ENCODE measurements at regions of chr6 and their contacts with region 1.

Region 1: DNA sequence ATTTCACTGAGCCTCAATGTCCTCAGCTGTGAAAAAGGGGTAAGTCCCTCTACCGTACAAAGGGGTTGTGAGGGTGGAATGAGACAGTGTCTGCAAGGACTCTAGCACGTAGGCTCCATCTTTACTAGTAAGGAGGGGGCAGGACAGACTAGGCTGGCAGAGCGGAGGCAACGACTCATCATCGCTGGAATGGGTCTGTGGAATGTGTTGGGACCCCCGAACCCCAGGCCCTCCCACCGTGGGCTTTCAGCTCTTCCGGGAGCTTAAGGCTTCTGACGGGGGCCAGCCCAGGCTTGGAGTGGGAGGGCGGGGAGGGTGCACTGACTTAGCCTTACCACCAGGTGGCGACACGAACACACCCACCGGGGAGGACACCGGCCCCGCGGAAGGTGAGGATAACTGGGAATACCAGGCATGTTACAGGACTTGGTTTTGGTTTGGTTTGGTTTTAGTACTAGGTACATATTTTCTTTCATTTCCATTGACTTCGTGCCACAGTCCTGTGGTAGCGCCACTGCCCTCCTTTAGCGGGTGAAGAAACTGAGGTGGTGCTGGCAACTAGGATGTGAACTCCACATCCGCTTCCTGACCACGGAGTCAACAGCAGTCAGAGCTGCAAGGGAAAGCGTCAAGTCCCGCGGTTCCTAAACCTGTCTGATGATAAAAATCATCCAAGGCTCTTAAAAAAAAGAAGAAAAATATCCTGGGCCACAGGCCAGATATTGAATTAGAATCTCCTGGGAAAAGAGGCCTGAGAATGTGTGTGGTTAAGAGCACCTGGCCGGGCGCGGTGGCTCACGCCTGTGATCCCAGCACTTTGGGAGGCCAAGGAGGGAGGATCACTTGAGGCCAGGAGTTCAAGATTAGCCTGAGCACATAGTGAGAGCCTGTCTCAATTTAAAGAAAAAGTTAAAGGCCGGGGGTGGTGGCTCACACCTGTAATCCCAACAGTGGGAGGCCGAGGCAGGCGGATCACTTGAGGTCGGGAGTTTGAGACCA is 10.3 kb upstream of the TULP1 start:
- DNase-seq: peak; percentile 96
- H3K4me3 ChIP-seq: peak overlapping the region; percentile 5 to 38 (median 26)
- H3K27ac ChIP-seq: no peak overlapping the region
- H3K4me1 ChIP-seq: peaks cover 0 to 10% (median 6%) of the 10 kb centered on the region in 4 donors
- H3K27me3 ChIP-seq: no peaks in the 10 kb centered on the region
- CTCF ChIP-seq: peak in 2 of 3 experiments; percentile 98
- EP300 ChIP-seq: no peak
- POLR2A ChIP-seq: no peak

Region 2: DNA sequence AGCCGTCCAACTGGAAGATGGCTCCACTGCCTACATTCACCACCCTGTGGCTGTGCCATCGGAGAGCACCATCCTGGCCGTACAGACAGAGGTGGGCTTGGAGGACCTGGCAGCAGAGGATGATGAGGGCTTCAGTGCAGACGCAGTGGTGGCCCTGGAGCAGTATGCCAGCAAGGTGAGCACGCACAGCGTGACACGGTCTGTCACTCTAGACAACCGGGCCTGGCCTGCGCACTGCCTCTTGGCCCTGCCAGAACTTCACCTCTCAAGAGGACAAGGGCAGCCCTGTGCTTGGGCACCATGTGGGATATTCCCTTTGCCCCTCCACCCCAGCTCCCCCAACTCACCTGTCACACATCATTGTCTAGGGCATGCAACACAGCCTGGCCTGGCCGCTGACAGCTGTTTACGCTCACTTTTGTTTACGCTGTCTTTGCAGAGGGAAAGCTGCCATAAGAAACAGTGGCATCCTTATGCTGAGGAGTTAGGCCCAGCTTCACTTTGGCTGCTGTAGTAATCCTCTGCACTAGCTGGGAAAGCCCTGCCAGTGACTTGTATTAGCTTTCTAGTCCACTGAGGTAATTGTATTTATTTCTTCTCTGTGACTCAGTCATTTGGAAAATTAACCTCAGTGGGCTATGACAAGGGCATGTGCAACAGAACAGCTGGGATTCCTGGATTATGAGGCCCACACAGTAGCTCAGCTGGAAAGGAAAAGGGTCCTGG is 235.1 kb before region 1 on chr6:
- intact Hi-C with region 1: no loop called
- DNase-seq: no peak
- H3K4me3 ChIP-seq: no peak overlapping the region
- H3K27ac ChIP-seq: no peak overlapping the region
- H3K4me1 ChIP-seq: peaks cover 0 to 10% (median 3%) of the 10 kb centered on the region in 4 donors
- H3K27me3 ChIP-seq: no peaks in the 10 kb centered on the region
- CTCF ChIP-seq: no peak
- EP300 ChIP-seq: no peak
- POLR2A ChIP-seq: no peak

Region 3: GRCh38 chr6:35445696-35446095 is 77.3 kb before region 1 on chr6:
- intact Hi-C with region 1: no loop called
- DNase-seq: no peak
- H3K4me3 ChIP-seq: no peak overlapping the region
- H3K27ac ChIP-seq: no peak overlapping the region
- H3K4me1 ChIP-seq: peaks cover 0 to 8% (median 3%) of the 10 kb centered on the region in 4 donors
- H3K27me3 ChIP-seq: no peaks in the 10 kb centered on the region
- CTCF ChIP-seq: no peak
- EP300 ChIP-seq: no peak
- POLR2A ChIP-seq: no peak

Region 4: GRCh38 chr6:35562053-35562452 is 39.1 kb after region 1 on chr6:
- intact Hi-C with region 1: loop called (anchors 5 kb)
- DNase-seq: no peak
- H3K4me3 ChIP-seq: no peak overlapping the region
- H3K27ac ChIP-seq: no peak overlapping the region
- H3K4me1 ChIP-seq: no peaks in the 10 kb centered on the region
- H3K27me3 ChIP-seq: peaks cover 0 to 23% (median 0%) of the 10 kb centered on the region in 4 donors
- CTCF ChIP-seq: no peak
- EP300 ChIP-seq: no peak
- POLR2A ChIP-seq: no peak

Region 5: DNA sequence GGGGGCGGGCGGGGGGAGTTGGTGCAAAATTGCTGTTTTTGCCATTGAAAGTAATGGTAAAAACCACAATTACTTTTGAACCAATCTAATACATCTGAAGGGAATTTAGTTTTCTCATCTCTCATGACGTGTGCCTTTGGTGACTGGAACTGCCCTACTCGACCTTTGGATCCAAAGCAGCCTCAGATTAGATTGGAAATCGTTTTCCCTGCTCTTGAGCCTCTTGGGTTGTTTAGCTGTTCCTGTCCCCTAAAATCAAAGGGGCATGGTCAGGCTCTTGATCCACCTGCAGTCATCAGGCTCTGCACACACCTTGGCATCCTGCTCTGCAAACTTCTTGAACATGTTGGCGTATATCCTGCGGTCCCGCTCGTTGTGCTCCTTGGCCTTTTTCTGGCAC is 53.7 kb after region 1 on chr6:
- intact Hi-C with region 1: loop called (anchors 5 kb)
- DNase-seq: no peak
- H3K4me3 ChIP-seq: no peak overlapping the region
- H3K27ac ChIP-seq: no peak overlapping the region
- H3K4me1 ChIP-seq: peaks cover 0 to 9% (median 0%) of the 10 kb centered on the region in 4 donors
- H3K27me3 ChIP-seq: no peaks in the 10 kb centered on the region
- CTCF ChIP-seq: no peak
- EP300 ChIP-seq: no peak
- POLR2A ChIP-seq: no peak

Region 6: DNA sequence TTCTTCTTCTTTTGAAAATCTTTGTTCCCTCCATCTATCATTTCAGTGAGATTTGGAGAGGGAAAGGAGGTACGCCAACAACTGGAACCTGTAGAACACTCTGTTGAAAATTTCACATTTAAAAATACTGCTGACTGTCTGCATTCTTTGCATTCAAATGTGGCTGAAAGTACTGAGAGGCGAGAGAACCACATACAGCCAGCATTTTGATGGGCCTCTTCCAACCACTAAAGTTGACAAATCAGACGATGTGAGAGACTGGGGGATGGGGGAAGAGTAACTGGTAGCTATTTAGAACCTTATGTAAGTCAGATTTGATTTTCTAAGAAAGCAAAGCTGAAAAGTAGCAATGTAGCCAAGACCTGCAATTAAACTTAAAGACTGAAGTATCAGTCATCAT is 88.3 kb after region 1 on chr6:
- intact Hi-C with region 1: loop called (anchors 10 kb)
- DNase-seq: no peak
- H3K4me3 ChIP-seq: no peak overlapping the region
- H3K27ac ChIP-seq: peak overlapping the region; percentile 7 to 98 (median 48)
- H3K4me1 ChIP-seq: peaks cover 8 to 87% (median 47%) of the 10 kb centered on the region in 4 donors
- H3K27me3 ChIP-seq: no peaks in the 10 kb centered on the region
- CTCF ChIP-seq: no peak
- EP300 ChIP-seq: no peak
- POLR2A ChIP-seq: no peak

Region 7: GRCh38 chr6:35737413-35738211 is 214.7 kb after region 1 on chr6:
- intact Hi-C with region 1: loop called (anchors 1 kb)
- DNase-seq: no peak
- H3K4me3 ChIP-seq: no peak overlapping the region
- H3K27ac ChIP-seq: peak overlapping the region in 1 of 4 donors; percentile 54
- H3K4me1 ChIP-seq: peaks cover 26 to 56% (median 49%) of the 10 kb centered on the region in 4 donors
- H3K27me3 ChIP-seq: no peaks in the 10 kb centered on the region
- CTCF ChIP-seq: peak; percentile 90 to 96 (median 92)
- EP300 ChIP-seq: no peak
- POLR2A ChIP-seq: no peak